Breast epithelium (tissue), 4 donors: ENCODE measurements at regions of chr4 and their contacts with region 1.

Region 1: DNA sequence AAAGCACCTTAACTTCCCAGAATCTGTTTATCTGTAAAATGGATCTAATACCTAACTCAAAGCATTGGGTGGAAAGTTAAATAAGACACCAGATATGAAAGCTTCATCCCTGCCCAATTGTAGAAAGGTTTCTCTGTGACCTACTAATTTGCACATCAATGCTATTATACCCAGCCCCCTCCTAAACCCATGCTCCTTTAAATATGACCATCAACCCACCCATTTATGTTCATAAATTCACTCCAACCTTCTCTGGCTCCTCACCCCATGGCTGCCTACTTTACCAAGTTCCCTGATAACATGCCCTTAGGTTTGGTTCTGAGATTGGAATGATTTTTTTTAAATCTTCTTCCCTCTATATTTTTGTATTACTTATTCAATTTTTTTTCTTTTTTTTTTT is 1.9 kb downstream of the LYAR start:
- DNase-seq: no peak
- H3K4me3 ChIP-seq: no peak overlapping the region
- H3K27ac ChIP-seq: no peak overlapping the region
- H3K4me1 ChIP-seq: peaks cover 6 to 16% of the 10 kb centered on the region in 2 donors
- H3K27me3 ChIP-seq: no peaks in the 10 kb centered on the region
- CTCF ChIP-seq: no peak
- POLR2A ChIP-seq: no peak

Region 2: GRCh38 chr4:4200624-4201023 is 87.5 kb before region 1 on chr4:
- intact Hi-C with region 1: no loop called
- DNase-seq: no peak
- H3K4me3 ChIP-seq: no peak overlapping the region
- H3K27ac ChIP-seq: no peak overlapping the region
- H3K4me1 ChIP-seq: no peaks in the 10 kb centered on the region
- H3K27me3 ChIP-seq: no peaks in the 10 kb centered on the region
- CTCF ChIP-seq: no peak
- POLR2A ChIP-seq: no peak

Region 3: GRCh38 chr4:4269856-4270255 is 18.2 kb before region 1 on chr4:
- intact Hi-C with region 1: no loop called
- DNase-seq: no peak
- H3K4me3 ChIP-seq: no peak overlapping the region
- H3K27ac ChIP-seq: no peak overlapping the region
- H3K4me1 ChIP-seq: no peaks in the 10 kb centered on the region
- H3K27me3 ChIP-seq: no peaks in the 10 kb centered on the region
- CTCF ChIP-seq: no peak
- POLR2A ChIP-seq: no peak

Region 4: GRCh38 chr4:4299006-4299405 is 10.9 kb after region 1 on chr4:
- intact Hi-C with region 1: loop called (anchors 1 kb)
- DNase-seq: no peak
- H3K4me3 ChIP-seq: no peak overlapping the region
- H3K27ac ChIP-seq: no peak overlapping the region
- H3K4me1 ChIP-seq: no peaks in the 10 kb centered on the region
- H3K27me3 ChIP-seq: no peaks in the 10 kb centered on the region
- CTCF ChIP-seq: no peak
- POLR2A ChIP-seq: no peak